Activated naive CD4-positive, alpha-beta T cell treated with anti-CD3 and anti-CD28 coated beads for 36 hours (primary cell): ENCODE measurements at regions of chr11 and their contacts with region 1.

Region 1: GRCh38 chr11:34335331-34335730 is 22.5 kb downstream of the ABTB2 start:
- DNase-seq: peak; percentile 16
- H3K4me3 Mint-ChIP-seq: no peak overlapping the region
- H3K27ac Mint-ChIP-seq: no peak overlapping the region
- H3K4me1 Mint-ChIP-seq: peaks cover 33% of the 10 kb centered on the region
- H3K27me3 Mint-ChIP-seq: peaks cover 12% of the 10 kb centered on the region

Region 2: GRCh38 chr11:33869481-33870422 is 465.6 kb before region 1 on chr11:
- CTCF ChIA-PET with region 1: no interaction called
- intact Hi-C with region 1: no loop called
- DNase-seq: peak; percentile 20
- H3K4me3 Mint-ChIP-seq: peak overlapping the region; percentile 76
- H3K27ac Mint-ChIP-seq: no peak overlapping the region
- H3K4me1 Mint-ChIP-seq: peaks cover 13% of the 10 kb centered on the region
- H3K27me3 Mint-ChIP-seq: peaks cover 58% of the 10 kb centered on the region

Region 3: DNA sequence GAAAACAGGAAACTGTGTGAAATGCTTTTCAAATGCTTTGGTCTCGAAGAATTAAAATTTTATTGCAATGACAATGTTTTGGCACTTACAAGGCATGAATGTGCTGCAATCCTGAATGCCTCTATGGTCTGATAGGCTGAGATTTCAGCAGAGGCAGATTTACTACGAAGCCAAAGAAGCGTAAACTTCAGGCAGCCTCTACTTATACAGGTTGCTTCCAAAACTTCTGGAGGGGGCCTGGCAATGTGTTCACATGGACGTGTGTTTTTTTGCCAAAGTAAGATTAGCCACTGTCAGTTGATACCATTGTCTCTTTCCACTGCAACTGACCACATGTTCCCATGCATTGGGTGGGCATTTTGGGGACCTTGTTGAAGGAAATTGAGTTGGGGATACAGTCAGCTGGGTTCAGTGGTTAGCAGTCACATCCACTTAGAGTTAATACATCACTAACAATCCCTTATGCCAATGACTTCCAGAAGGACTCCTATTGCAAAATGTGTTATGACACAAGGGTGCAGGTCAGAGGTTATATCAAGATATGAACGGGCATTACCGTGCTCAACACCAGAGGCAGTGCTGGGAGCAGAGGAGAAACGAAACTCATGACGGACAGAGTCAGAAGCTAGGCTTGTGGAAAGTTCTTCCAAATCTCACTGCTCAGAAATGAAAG is 26.3 kb before region 1 on chr11:
- CTCF ChIA-PET with region 1: interaction called, 3 read pairs
- intact Hi-C with region 1: loop called (anchors 1 kb)
- DNase-seq: peak; percentile 10
- H3K4me3 Mint-ChIP-seq: no peak overlapping the region
- H3K27ac Mint-ChIP-seq: no peak overlapping the region
- H3K4me1 Mint-ChIP-seq: peaks cover 35% of the 10 kb centered on the region
- H3K27me3 Mint-ChIP-seq: no peaks in the 10 kb centered on the region